ENCODE measurements at regions of chrX and their contacts with region 1.

Region 1: GRCh38 chrX:43750248-43750676 is 94.2 kb downstream of the MAOA start:
- DNase-seq: no peak
- H3K4me3 ChIP-seq: no peak overlapping the region
- H3K27ac ChIP-seq: no peak overlapping the region
- H3K4me1 ChIP-seq: peaks cover 0 to 11% (median 3%) of the 10 kb centered on the region in 4 donors
- H3K27me3 ChIP-seq: no peaks in the 10 kb centered on the region
- CTCF ChIP-seq: peak; percentile 51 to 66 (median 54)
- EP300 ChIP-seq: no peak
- POLR2A ChIP-seq: no peak

Region 2: GRCh38 chrX:41779058-41779610 is 1971.1 kb before region 1 on chrX:
- intact Hi-C with region 1: loop called (anchors 5 kb)
- DNase-seq: no peak
- H3K4me3 ChIP-seq: no peak overlapping the region
- H3K27ac ChIP-seq: no peak overlapping the region
- H3K4me1 ChIP-seq: peaks cover 0 to 16% (median 6%) of the 10 kb centered on the region in 4 donors
- H3K27me3 ChIP-seq: no peaks in the 10 kb centered on the region
- CTCF ChIP-seq: no peak
- EP300 ChIP-seq: no peak
- POLR2A ChIP-seq: no peak

Region 3: DNA sequence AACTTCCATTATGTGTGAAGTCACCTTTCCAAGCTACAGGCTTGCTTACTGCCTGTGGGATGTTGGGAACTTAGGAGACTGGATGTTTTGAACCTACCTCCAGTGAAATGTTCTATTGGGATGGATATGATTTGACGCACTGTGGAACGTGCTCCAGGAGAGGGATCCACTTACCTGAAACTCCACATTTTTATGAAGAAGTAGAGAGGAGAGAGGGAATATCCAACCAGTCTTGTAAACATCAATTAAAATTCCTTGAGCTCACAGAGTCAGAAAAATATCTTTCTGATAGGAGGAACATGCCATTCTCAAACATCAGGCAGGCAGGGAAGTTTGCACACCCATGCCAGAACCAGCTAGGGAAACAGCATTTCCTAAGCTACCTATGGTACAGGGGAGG is 185.3 kb before region 1 on chrX:
- intact Hi-C with region 1: no loop called
- DNase-seq: no peak
- H3K4me3 ChIP-seq: no peak overlapping the region
- H3K27ac ChIP-seq: no peak overlapping the region
- H3K4me1 ChIP-seq: peaks cover 0 to 13% (median under 1%) of the 10 kb centered on the region in 4 donors
- H3K27me3 ChIP-seq: no peaks in the 10 kb centered on the region
- CTCF ChIP-seq: peak in 1 of 3 experiments; percentile 8
- EP300 ChIP-seq: no peak
- POLR2A ChIP-seq: no peak